Activated CD8-positive, alpha-beta T cell treated with anti-CD3 and anti-CD28 coated beads for 36 hours (primary cell): ENCODE measurements at regions of chr3 and their contacts with region 1.

Region 1: GRCh38 chr3:8622873-8623691 is 21.5 kb downstream of the SSUH2 start:
- DNase-seq: peak; percentile 63
- ATAC-seq: peak; percentile 84
- H3K4me3 Mint-ChIP-seq: no peak overlapping the region
- H3K27ac Mint-ChIP-seq: no peak overlapping the region
- H3K4me1 Mint-ChIP-seq: peaks cover 3% of the 10 kb centered on the region
- H3K27me3 Mint-ChIP-seq: peaks cover 13% of the 10 kb centered on the region
- CTCF ChIP-seq: peak; percentile 76

Region 2: DNA sequence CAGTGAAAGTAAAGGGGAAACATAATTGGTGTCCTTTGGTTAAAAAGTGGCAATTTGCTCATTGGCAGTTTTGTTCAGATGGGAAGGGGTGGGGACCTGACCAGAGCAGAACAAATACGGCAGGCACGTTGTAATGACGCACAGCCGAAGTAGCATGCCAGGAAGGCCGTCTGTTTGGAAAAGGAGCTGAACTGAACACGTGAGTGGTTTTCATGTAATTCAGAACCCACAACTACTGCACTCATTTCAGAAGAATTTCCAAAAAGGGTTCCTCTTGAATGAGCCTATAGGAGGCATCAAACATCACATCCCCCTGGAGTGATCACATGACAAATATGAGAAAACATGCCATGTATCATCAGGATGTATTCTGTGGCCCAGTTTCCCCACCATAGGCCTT is 164.4 kb before region 1 on chr3:
- CTCF ChIA-PET with region 1: no interaction called
- POLR2A ChIA-PET with region 1: no interaction called
- intact Hi-C with region 1: loop called (anchors 10 kb)
- DNase-seq: no peak
- ATAC-seq: no peak
- H3K4me3 Mint-ChIP-seq: no peak overlapping the region
- H3K27ac Mint-ChIP-seq: no peak overlapping the region
- H3K4me1 Mint-ChIP-seq: no peaks in the 10 kb centered on the region
- H3K27me3 Mint-ChIP-seq: peaks cover 3% of the 10 kb centered on the region
- CTCF ChIP-seq: no peak